IMR-90 (cell line): ENCODE measurements at regions of chr2 and their contacts with region 1.

Region 1: DNA sequence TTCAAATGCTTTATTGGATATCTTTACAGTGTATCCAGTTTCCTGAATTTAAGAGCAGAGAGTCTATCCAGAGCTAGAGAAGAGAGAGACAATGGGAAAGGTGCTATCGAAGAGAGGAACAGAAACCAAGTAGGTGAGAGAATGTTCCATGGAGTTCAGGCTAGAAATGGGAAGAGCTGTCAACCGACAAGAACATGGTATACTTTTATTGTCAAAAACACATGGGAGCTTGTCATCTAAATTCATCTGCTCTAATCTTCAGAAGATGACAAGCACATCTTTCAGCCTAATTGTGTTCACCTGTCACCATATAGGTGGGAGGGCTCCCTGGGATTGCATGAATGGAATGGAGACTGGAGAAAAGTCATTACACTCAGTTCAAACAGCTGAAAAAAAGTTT is 690.4 kb upstream of the LRATD1 start:
- DNase-seq: no peak
- ATAC-seq: no peak
- H3K4me3 ChIP-seq: no peak overlapping the region
- H3K27ac ChIP-seq: no peak overlapping the region
- H3K4me1 ChIP-seq: no peaks in the 10 kb centered on the region
- H3K27me3 ChIP-seq: no peaks in the 10 kb centered on the region
- CTCF ChIP-seq: no peak
- POLR2A ChIP-seq: no peak
- RAD21 ChIP-seq: no peak

Region 2: GRCh38 chr2:13821255-13821880 is 120.7 kb before region 1 on chr2:
- CTCF ChIA-PET with region 1: no interaction called
- POLR2A ChIA-PET with region 1: no interaction called
- dilution Hi-C with region 1: no loop called
- in situ Hi-C with region 1: no loop called
- intact Hi-C with region 1: no loop called
- DNase-seq: peak; percentile 74
- ATAC-seq: 0 out of 2 replicates have a peak, but pooled peaks have one; percentile 24
- H3K4me3 ChIP-seq: no peak overlapping the region
- H3K27ac ChIP-seq: no peak overlapping the region
- H3K4me1 ChIP-seq: no peaks in the 10 kb centered on the region
- H3K27me3 ChIP-seq: no peaks in the 10 kb centered on the region
- CTCF ChIP-seq: no peak
- POLR2A ChIP-seq: no peak
- RAD21 ChIP-seq: no peak

Region 3: GRCh38 chr2:14137643-14138042 is 195.5 kb after region 1 on chr2:
- CTCF ChIA-PET with region 1: no interaction called
- POLR2A ChIA-PET with region 1: no interaction called
- dilution Hi-C with region 1: no loop called
- in situ Hi-C with region 1: no loop called
- intact Hi-C with region 1: no loop called
- DNase-seq: no peak
- ATAC-seq: no peak
- H3K4me3 ChIP-seq: no peak overlapping the region
- H3K27ac ChIP-seq: no peak overlapping the region
- H3K4me1 ChIP-seq: no peaks in the 10 kb centered on the region
- H3K27me3 ChIP-seq: no peaks in the 10 kb centered on the region
- CTCF ChIP-seq: no peak
- POLR2A ChIP-seq: no peak
- RAD21 ChIP-seq: no peak

Region 4: GRCh38 chr2:14815201-14815600 is 873.1 kb after region 1 on chr2:
- CTCF ChIA-PET with region 1: no interaction called
- POLR2A ChIA-PET with region 1: no interaction called
- dilution Hi-C with region 1: no loop called
- in situ Hi-C with region 1: no loop called
- intact Hi-C with region 1: loop called (anchors 5 kb)
- DNase-seq: no peak
- ATAC-seq: no peak
- H3K4me3 ChIP-seq: no peak overlapping the region
- H3K27ac ChIP-seq: no peak overlapping the region
- H3K4me1 ChIP-seq: no peaks in the 10 kb centered on the region
- H3K27me3 ChIP-seq: no peaks in the 10 kb centered on the region
- CTCF ChIP-seq: no peak
- POLR2A ChIP-seq: no peak
- RAD21 ChIP-seq: no peak